Activated T-helper 1 cell treated with anti-CD3 and anti-CD28 coated beads, Interleukin-12 subunit alpha, Interleukin-12 subunit beta, Interleukin-2, Interleukin-4 antibody, amounts not matched to agents 30 ng/mL and 10 ng/mL and 1 ng/mL, durations not matched to agents 14 hours and 24 hours and 36 hours (primary cell): ENCODE measurements at regions of chr10 and their contacts with region 1.

Region 1: GRCh38 chr10:102167861-102168260 is 15.7 kb downstream of the NOLC1 start:
- DNase-seq: no peak
- H3K4me3 Mint-ChIP-seq: no peak overlapping the region
- H3K27ac Mint-ChIP-seq: no peak overlapping the region
- H3K4me1 Mint-ChIP-seq: peaks cover 10% of the 10 kb centered on the region
- H3K27me3 Mint-ChIP-seq: no peaks in the 10 kb centered on the region

Region 2: DNA sequence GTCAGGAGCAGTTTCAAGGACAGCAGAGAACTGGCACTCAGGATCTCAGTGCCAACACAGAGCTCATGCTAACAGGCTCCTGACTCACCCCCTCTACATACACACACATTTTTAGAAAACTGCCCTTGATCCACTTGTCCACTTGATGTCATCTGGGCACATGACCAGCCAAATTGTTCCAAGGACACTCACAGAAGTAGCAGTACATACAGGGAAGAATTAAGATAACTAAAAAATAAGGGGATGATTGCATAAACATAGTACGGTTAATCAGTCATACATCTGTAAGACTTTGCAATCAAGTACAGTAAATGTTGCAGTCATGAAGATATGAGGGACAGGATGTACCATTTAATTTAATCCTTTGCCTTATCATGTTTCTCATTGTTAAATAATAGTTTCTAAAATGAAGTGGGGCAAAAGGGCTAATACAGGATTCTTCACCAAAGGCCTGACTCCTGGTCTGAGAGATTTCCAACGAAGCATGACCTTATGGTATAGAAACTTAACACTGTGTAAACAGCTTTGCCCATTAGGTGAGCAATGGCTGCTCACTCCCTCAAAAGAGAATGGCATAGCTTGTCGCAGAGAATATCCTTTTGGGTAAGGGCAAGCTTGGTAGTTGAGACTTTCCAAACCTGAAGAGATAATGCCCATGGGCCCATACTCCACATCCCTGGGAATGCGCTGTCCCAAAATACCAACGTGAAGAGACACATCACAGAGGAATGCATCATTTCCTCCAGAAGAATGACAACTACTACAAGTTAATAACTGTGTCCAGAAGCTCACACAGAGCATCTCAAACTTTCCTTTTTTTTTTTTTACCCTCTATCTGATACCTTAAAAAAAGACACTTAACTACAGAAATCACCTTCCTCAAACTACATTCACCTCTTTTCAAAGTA is 206.0 kb before region 1 on chr10:
- intact Hi-C with region 1: no loop called
- DNase-seq: no peak
- H3K4me3 Mint-ChIP-seq: no peak overlapping the region
- H3K27ac Mint-ChIP-seq: no peak overlapping the region
- H3K4me1 Mint-ChIP-seq: no peaks in the 10 kb centered on the region
- H3K27me3 Mint-ChIP-seq: no peaks in the 10 kb centered on the region

Region 3: GRCh38 chr10:102185811-102186527 is 18.1 kb after region 1 on chr10:
- intact Hi-C with region 1: loop called (anchors 1 kb)
- DNase-seq: no peak
- H3K4me3 Mint-ChIP-seq: no peak overlapping the region
- H3K27ac Mint-ChIP-seq: no peak overlapping the region
- H3K4me1 Mint-ChIP-seq: peaks cover 18% of the 10 kb centered on the region
- H3K27me3 Mint-ChIP-seq: peaks cover 4% of the 10 kb centered on the region

Region 4: DNA sequence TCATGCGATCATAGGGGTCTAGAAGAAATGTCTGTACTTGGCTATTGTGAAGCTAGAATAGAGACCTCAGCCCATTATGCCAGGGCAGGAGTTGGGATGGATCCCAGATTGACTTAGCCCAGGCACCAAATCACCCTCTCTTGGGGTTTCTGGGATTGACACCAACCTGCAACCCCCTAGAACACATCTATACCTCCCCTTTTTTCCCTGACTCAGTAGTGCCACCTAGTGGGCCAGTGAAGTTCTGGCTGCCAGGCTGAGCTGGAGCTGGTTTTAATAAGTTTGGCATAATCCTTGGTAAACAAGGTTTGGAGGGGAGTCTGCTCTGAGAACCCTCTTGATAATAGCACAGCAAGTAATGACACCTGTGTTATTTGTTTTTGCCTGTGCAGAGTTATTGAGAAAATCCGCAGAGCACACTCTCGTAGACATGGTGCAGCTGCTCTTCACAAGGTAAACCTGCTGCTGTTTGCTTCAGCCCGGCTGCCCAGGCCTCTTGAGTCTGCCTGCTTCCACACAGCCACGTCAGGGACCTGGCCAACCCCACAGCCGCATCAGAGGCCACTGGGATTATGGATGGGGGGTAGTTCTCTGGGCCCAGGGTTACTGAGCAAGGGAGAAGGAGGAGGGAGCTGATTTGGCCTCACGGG is 184.3 kb after region 1 on chr10:
- intact Hi-C with region 1: loop called (anchors 1 kb)
- DNase-seq: peak; percentile 41
- H3K4me3 Mint-ChIP-seq: no peak overlapping the region
- H3K27ac Mint-ChIP-seq: no peak overlapping the region
- H3K4me1 Mint-ChIP-seq: no peaks in the 10 kb centered on the region
- H3K27me3 Mint-ChIP-seq: no peaks in the 10 kb centered on the region

Region 5: DNA sequence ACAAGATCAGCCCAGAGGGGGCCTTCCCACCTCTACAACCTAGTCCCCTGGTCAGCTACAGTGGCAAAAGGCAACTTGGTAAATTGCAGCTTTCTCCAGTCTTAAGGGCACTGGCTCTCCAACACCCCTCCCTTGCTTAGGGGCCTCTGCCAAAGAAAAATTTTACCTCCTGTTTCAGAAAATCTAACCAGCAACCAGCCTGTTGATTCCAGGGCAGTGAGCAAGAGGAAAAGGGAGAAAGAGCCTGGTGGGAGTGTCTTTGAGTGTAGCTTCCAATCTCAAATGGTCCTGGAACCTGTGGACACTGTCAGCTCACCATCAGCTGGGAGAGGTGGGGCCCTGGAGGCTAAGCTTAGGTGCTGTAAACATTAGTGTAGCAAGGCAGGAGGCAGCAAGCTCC is 311.8 kb after region 1 on chr10:
- intact Hi-C with region 1: loop called (anchors 1 kb)
- DNase-seq: no peak
- H3K4me3 Mint-ChIP-seq: no peak overlapping the region
- H3K27ac Mint-ChIP-seq: no peak overlapping the region
- H3K4me1 Mint-ChIP-seq: peaks cover 7% of the 10 kb centered on the region
- H3K27me3 Mint-ChIP-seq: no peaks in the 10 kb centered on the region

Region 6: GRCh38 chr10:102596506-102596971 is 428.7 kb after region 1 on chr10:
- intact Hi-C with region 1: loop called (anchors 1 kb)
- DNase-seq: no peak
- H3K4me3 Mint-ChIP-seq: no peak overlapping the region
- H3K27ac Mint-ChIP-seq: no peak overlapping the region
- H3K4me1 Mint-ChIP-seq: no peaks in the 10 kb centered on the region
- H3K27me3 Mint-ChIP-seq: no peaks in the 10 kb centered on the region